Psoas muscle (tissue), 8 donors: ENCODE measurements at regions of chr1 and their contacts with region 1.

Region 1: DNA sequence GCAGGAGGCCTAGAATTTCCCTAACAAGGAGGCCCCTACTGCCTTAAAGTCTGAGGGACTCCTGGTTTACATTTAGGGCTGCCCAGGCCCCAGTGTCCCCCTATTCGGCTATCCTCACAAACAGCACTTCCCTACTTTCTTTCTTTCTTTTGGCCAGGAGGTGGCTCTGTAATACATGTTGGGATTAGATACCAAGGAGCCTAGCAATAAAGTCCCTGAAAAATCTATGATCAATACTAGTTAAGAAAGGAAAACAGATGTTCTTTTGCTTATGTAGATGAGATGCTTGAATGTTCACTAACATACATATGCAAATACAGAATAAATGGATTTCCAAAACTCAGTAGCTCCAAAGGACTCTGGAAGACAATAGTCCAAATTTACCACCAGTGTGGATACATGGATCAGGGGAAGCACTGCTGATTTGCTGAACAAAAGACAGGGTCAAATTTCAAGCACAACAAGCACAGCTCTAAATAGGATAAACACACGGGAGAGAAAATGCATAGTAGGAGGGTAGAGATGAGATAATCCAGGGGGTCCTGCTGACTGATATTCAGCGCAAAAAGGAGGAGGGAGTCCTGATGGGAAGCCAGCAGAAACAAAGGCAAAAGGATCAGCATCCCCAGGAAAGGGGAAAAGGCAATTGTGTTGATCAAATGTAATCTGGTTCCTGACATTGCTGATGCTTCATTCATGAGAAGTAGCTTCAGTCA is 240.0 kb downstream of the NUF2 start:
- DNase-seq: no peak
- ATAC-seq: no peak
- H3K4me3 ChIP-seq: no peak overlapping the region
- H3K27ac ChIP-seq: no peak overlapping the region
- H3K4me1 ChIP-seq: no peaks in the 10 kb centered on the region
- H3K27me3 ChIP-seq: no peaks in the 10 kb centered on the region
- CTCF ChIP-seq: peak; percentile 19

Region 2: GRCh38 chr1:163528710-163529348 is 32.9 kb before region 1 on chr1:
- intact Hi-C with region 1: loop called in 1 of 2 experiments (anchors 1 kb)
- DNase-seq: no peak
- ATAC-seq: peak in 1 of 4 donors; percentile 45
- H3K4me3 ChIP-seq: no peak overlapping the region
- H3K27ac ChIP-seq: no peak overlapping the region
- H3K4me1 ChIP-seq: no peaks in the 10 kb centered on the region
- H3K27me3 ChIP-seq: no peaks in the 10 kb centered on the region
- CTCF ChIP-seq: peak; percentile 49